Heart left ventricle (tissue), 16 donors: ENCODE measurements at regions of chr18 and their contacts with region 1.

Region 1: DNA sequence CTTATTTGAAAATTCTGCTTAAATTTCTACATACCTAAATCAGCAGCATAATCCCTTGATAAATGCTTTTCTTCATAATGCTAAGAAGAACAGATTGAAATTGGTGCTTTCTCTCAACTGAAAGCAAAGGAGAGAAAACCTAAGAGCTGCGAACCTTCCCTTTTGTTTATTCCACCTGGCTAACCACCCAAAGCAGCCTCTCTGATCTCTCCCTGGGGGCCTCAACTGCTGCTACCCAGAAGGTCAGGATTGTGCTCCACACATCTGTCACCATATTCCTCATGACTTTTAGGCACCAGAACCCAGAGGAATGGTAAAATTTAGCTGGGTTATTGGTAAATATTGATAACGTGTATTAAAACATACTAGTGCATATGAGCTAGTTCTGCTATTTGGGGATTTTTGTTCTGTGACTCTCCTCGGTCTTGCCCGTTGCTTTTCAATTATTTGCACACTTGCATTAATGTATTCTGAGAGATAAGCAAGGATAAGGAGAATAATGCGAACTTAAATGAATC is 334.1 kb downstream of the RIT2 start:
- DNase-seq: no peak
- ATAC-seq: no peak
- H3K4me3 ChIP-seq: no peak overlapping the region
- H3K27ac ChIP-seq: no peak overlapping the region
- H3K4me1 ChIP-seq: no peaks in the 10 kb centered on the region
- H3K27me3 ChIP-seq: no peaks in the 10 kb centered on the region
- CTCF ChIP-seq: no peak
- POLR2A ChIP-seq: no peak

Region 2: DNA sequence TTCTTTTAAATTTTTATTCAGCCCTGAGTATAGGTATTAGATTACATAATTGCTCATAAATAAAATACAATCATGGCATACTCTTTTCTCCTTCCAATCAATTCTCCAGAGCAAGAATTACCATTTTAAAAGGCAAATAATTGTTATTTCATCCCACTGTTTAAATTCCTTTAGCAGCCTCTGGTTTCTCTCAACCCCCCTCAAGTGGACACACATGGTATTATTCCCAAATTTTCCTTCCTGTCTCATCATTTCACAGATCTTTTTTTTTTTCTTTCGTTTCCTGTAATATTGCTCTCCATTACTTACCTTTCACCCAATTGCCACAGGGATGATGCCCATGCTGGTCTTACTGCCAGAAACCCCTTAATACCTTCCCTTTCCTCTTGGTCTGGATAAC is 51.1 kb before region 1 on chr18:
- intact Hi-C with region 1: loop called in 1 of 10 experiments (anchors 10 kb)
- DNase-seq: no peak
- ATAC-seq: no peak
- H3K4me3 ChIP-seq: no peak overlapping the region
- H3K27ac ChIP-seq: no peak overlapping the region
- H3K4me1 ChIP-seq: no peaks in the 10 kb centered on the region
- H3K27me3 ChIP-seq: no peaks in the 10 kb centered on the region
- CTCF ChIP-seq: peak in 6 of 12 donors; percentile 11 to 37 (median 22)
- POLR2A ChIP-seq: no peak

Region 3: DNA sequence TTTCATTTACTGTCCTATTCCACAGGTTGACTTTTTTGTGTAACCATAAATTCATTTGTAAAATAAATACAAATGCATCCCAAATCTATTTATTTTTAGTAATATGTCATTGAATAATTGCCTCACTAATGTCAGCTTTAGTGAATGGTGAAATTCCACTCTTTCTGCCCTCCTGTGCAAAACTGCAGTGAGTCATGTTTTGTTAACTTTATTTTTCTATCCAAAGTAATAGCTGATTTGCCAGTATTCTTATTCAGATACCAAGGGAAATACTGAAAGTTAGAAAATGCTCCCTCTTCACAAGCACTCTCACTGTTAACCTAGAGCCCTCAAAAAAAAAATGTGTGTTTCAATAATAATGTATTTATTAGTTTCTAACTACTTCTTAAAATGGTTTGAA is 11.4 kb after region 1 on chr18:
- intact Hi-C with region 1: loop called in 1 of 10 experiments (anchors 1 kb)
- DNase-seq: no peak
- ATAC-seq: no peak
- H3K4me3 ChIP-seq: no peak overlapping the region
- H3K27ac ChIP-seq: no peak overlapping the region
- H3K4me1 ChIP-seq: no peaks in the 10 kb centered on the region
- H3K27me3 ChIP-seq: no peaks in the 10 kb centered on the region
- CTCF ChIP-seq: no peak
- POLR2A ChIP-seq: no peak

Region 4: GRCh38 chr18:43220691-43221090 is 439.3 kb after region 1 on chr18:
- intact Hi-C with region 1: no loop called
- DNase-seq: no peak
- ATAC-seq: no peak
- H3K4me3 ChIP-seq: no peak overlapping the region
- H3K27ac ChIP-seq: no peak overlapping the region
- H3K4me1 ChIP-seq: no peaks in the 10 kb centered on the region
- H3K27me3 ChIP-seq: no peaks in the 10 kb centered on the region
- CTCF ChIP-seq: no peak
- POLR2A ChIP-seq: no peak